Activated CD4-positive, alpha-beta T cell treated with anti-CD3 and anti-CD28 coated beads for 36 hours (primary cell): ENCODE measurements at regions of chr10 and their contacts with region 1.

Region 1: GRCh38 chr10:124403548-124403947 is 15.2 kb downstream of the OAT start:
- DNase-seq: peak; percentile 27
- ATAC-seq: peak; percentile 100
- H3K4me3 Mint-ChIP-seq: no peak overlapping the region
- H3K27ac Mint-ChIP-seq: peak overlapping the region; percentile 16
- H3K4me1 Mint-ChIP-seq: peaks cover 8% of the 10 kb centered on the region
- H3K27me3 Mint-ChIP-seq: no peaks in the 10 kb centered on the region

Region 2: GRCh38 chr10:124354411-124355382 is 48.9 kb before region 1 on chr10:
- CTCF ChIA-PET with region 1: interaction called, 10 read pairs
- POLR2A ChIA-PET with region 1: no interaction called
- intact Hi-C with region 1: no loop called
- DNase-seq: peak; percentile 69
- ATAC-seq: peak; percentile 98
- H3K4me3 Mint-ChIP-seq: peak overlapping the region; percentile 75
- H3K27ac Mint-ChIP-seq: peak overlapping the region; percentile 88
- H3K4me1 Mint-ChIP-seq: peaks cover 13% of the 10 kb centered on the region
- H3K27me3 Mint-ChIP-seq: no peaks in the 10 kb centered on the region